ENCODE measurements at regions of chr6 and their contacts with region 1.

Region 1: DNA sequence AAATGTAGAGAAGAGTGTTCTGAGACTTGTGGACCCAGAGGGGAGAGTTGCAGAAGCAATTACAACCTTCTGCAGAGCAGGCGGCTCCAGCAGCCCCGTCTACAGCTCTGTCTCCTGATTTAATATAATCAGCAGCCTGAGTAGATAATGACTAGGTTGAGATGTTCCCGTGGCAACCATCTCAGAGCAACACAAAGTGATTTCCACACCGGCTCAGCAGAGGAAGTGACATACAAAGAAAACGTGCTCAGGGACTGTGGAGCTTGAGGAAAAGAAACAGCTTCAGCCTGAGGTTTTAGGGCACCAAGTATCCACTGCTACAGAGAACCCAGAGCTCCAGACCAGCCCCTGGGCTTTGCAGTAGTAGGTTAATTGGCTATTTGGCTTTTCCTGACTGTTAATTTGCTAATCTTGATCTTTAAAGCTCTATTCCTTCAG is 136.4 kb downstream of the MTFR2 start:
- DNase-seq: peak in 4 of 5 donors; percentile 67 to 75 (median 74)
- ATAC-seq: peak; percentile 94 to 97 (median 96)
- H3K4me3 ChIP-seq: peak overlapping the region in 1 of 12 donors; percentile 3
- H3K27ac ChIP-seq: peak overlapping the region; percentile 3 to 89 (median 74)
- H3K4me1 ChIP-seq: peaks cover 0 to 67% (median 32%) of the 10 kb centered on the region in 12 donors
- H3K27me3 ChIP-seq: no peaks in the 10 kb centered on the region
- CTCF ChIP-seq: no peak
- POLR2A ChIP-seq: peak in 1 of 2 donors; percentile 63

Region 2: DNA sequence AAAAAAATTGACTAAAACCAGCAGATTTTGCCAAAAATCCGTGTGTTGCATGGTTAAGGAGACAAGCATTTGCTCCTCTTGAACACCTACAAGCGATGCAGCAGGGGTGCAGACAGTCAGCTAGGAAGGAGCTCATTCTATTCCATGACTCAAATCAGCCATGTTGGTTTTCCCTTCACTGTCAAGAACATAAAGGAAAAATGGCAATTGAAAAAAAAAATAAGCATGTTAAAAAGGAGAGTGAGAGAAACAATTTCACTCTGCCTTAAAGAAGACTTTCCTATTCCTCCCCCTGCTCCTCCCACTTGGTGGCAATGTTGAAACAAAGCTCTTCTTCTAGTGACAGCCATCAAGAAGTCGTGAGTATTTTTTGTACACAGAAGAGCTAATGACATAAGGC is 21.0 kb after region 1 on chr6:
- intact Hi-C with region 1: no loop called
- DNase-seq: no peak
- ATAC-seq: no peak
- H3K4me3 ChIP-seq: no peak overlapping the region
- H3K27ac ChIP-seq: no peak overlapping the region
- H3K4me1 ChIP-seq: peaks cover 0 to 26% (median 9%) of the 10 kb centered on the region in 12 donors
- H3K27me3 ChIP-seq: no peaks in the 10 kb centered on the region
- CTCF ChIP-seq: peak in 1 of 12 donors; percentile 9
- POLR2A ChIP-seq: no peak

Region 3: DNA sequence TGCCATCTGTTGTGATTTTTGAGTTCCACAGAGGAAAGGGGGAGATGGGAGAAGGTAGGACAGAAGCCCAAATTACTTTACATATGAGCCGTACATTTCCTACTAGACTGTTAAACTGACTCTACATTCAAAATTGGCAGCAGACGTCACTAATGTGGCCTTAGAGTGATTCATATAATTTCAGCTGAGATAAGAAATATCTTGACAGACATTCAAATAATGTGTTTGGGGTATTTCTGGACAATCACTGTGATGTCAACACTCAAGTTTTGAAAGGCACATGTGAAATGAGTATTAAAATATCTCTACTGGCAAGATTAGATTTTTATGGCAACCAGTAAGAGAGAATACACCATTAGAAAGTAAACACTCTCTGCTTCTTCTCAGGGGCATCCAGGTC is 32.4 kb after region 1 on chr6:
- intact Hi-C with region 1: loop called in 2 of 10 experiments (anchors 5 to 10 kb)
- DNase-seq: no peak
- ATAC-seq: peak; percentile 48 to 69 (median 60)
- H3K4me3 ChIP-seq: no peak overlapping the region
- H3K27ac ChIP-seq: peak overlapping the region; percentile 6 to 77 (median 30)
- H3K4me1 ChIP-seq: peaks cover 0 to 43% (median 11%) of the 10 kb centered on the region in 12 donors
- H3K27me3 ChIP-seq: no peaks in the 10 kb centered on the region
- CTCF ChIP-seq: no peak
- POLR2A ChIP-seq: no peak

Region 4: GRCh38 chr6:136236466-136237293 is 122.9 kb after region 1 on chr6:
- intact Hi-C with region 1: no loop called
- DNase-seq: no peak
- ATAC-seq: peak in 1 of 4 donors; percentile 50
- H3K4me3 ChIP-seq: no peak overlapping the region
- H3K27ac ChIP-seq: no peak overlapping the region
- H3K4me1 ChIP-seq: no peaks in the 10 kb centered on the region
- H3K27me3 ChIP-seq: no peaks in the 10 kb centered on the region
- CTCF ChIP-seq: no peak
- POLR2A ChIP-seq: no peak

Region 5: DNA sequence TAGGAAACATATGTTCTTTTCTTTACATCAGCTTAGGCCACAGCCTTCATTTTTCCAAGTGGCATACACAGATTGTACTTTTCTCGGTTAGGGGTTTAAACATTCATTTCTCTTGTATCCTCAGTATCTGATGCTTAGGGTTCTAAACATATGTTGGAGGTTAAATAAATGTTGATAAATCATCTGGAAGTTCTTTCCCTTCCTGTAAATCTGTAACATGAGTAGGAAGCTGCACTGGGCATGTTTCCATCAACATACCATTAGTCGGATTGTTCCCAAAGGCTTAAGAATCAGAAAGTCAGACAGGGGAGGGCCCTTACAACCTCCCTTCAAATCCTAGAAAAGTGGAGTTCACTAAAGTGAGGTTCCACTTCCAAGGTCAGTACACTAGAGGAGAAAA is 230.7 kb after region 1 on chr6:
- intact Hi-C with region 1: no loop called
- DNase-seq: no peak
- ATAC-seq: no peak
- H3K4me3 ChIP-seq: no peak overlapping the region
- H3K27ac ChIP-seq: no peak overlapping the region
- H3K4me1 ChIP-seq: no peaks in the 10 kb centered on the region
- H3K27me3 ChIP-seq: no peaks in the 10 kb centered on the region
- CTCF ChIP-seq: no peak
- POLR2A ChIP-seq: no peak

Measured in heart left ventricle (tissue), 16 donors.